Activated T-helper 2 cell treated with anti-CD3 and anti-CD28 coated beads, Interferon-gamma antibody, Interleukin-2, Interleukin-4, amounts not matched to agents 10 μg/mL and 5 μg/mL and 100 μg/mL, durations not matched to agents 14 hours and 24 hours and 36 hours (primary cell): ENCODE measurements at regions of chr12 and their contacts with region 1.

Region 1: DNA sequence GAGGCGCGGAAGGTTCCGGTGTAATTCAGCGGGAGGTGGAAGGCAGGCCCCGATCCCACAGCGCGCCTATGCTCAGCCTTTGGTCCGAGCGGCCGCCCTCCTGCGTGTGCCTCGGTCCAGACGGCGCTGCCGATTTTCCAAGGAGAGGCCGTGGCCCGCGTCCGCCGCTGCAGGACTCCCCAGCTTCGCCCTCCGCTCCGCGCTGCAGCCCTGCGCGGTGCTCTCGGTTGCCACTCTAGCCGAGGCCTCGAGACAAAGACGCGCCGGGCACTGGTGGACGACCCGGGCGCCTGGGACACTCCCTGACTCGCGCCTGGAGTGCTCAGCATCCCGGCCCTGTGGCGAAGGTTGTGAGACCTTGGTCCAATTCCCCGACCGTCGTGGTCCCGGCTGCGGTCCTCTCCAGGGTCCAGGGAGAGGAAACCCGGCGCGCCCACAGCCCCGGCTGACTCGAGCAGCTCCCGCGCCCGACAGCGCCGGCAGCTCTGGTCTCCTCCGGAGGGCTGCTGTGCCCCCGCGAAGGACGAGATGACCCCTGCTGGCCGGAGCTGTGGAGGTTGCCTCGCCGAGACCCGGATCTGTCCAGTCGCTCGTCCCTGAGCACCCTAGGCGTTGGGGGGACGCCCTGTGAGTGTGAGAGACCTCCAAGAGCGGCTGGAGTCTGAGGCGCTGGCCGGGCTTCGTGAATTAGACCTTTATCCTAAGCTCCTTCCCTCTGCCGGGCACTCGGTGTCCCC is 6.5 kb downstream of the HOXC12 start:
- DNase-seq: no peak
- H3K4me3 Mint-ChIP-seq: no peak overlapping the region
- H3K27ac Mint-ChIP-seq: no peak overlapping the region
- H3K4me1 Mint-ChIP-seq: peaks cover 4% of the 10 kb centered on the region
- H3K27me3 Mint-ChIP-seq: peaks cover 84% of the 10 kb centered on the region

Region 2: DNA sequence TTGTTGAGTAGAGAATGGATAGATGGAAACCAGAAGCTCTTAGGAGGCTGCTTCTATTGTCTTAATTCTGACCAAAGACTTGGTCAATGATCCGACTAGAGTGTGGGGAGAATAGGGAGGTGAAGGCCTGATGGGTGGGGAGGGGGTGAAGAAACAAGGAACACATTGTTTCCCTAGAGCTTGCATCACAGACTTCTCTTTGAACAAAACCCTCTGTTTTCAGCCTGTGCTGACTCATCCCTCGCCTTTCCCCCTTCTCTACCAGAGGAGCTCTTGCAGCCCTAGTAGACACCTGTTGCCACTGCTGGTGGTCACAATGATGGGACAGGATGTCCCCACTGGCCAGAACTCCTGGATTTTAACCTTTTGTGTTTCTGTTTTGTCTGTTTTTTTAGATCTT is 162.6 kb before region 1 on chr12:
- intact Hi-C with region 1: no loop called
- DNase-seq: no peak
- H3K4me3 Mint-ChIP-seq: no peak overlapping the region
- H3K27ac Mint-ChIP-seq: no peak overlapping the region
- H3K4me1 Mint-ChIP-seq: no peaks in the 10 kb centered on the region
- H3K27me3 Mint-ChIP-seq: peaks cover 31% of the 10 kb centered on the region

Region 3: DNA sequence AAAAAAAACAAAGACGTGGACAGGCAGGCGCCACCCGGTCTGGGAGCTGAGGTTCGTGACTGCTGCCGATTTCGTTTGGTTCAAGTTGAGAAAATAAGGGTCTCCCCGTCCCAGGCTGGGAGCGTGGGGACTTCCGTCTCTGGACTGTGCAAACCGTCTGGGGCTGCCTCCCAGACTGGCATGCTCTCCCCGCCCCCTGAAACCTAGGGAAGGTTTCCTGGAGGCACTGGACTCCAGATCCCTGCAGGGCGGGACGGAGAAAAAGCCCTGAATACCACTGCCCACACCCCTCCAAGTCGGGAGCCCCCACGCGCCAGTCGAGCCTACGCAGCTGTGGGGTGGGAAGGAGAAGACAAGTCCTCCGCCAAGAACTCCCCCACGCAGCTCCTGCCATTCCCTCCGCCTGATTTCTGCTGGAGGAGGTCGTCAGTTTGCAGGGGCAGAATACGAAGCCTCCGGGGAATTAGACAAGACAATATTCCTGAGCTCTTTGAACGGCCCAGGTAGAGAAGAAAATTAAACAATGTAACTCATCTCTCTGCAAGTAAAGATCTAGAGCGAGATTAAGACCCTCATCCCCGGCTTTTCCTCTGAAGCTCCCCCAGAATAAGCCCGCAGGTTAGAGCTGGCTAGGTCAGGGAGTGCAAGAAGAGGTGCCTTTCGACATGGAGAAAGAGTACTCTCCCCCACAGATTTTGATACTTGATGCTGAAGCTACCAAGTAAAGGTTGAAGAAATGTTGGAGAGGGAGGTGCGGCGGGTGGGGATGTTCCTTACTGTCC is 32.9 kb before region 1 on chr12:
- intact Hi-C with region 1: loop called (anchors 5 kb)
- DNase-seq: no peak
- H3K4me3 Mint-ChIP-seq: no peak overlapping the region
- H3K27ac Mint-ChIP-seq: no peak overlapping the region
- H3K4me1 Mint-ChIP-seq: no peaks in the 10 kb centered on the region
- H3K27me3 Mint-ChIP-seq: peaks cover 90% of the 10 kb centered on the region

Region 4: DNA sequence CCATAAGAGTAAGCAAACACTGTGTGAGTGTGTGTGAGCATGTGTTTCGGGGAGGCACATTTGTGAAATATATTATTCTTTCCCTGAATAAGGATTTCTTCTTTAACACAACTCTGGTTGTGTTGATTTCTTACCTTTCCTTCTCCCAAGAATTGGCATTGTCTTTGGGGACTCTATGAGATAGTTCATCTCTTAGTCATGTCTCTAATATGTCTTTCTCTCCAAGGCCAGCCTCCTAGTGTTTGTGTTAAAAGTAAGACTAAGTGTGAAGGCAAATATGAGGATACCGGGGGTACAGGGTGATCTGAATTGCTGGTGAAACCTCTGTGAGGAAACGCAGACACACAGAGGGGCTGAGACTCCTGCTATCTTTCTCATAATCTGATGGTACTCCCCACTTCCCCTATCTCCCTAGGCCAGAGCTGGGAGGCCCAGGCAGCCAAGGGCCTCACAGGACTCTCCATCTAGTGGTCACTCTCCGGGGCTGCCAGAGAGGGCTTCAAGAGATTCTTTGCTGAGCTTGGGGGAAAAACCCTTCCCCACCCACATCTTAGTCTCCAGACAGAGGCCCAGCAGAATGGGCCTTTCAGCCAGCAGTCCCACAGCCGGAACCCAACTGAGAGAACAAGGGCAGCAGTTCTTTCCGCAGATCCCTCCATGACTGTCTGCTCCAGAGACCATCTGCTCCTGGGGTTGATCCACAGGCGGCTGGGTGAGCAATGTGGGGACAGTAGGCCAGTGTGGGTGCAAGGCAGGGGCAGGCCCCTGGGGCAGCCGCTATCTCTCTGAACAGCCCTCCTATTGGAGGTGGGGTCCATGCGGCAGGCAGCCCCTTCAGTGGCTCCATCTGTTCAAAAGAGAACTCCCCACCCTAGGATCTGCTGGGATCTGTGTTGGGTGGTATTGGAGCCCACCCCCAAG is 12.3 kb before region 1 on chr12:
- intact Hi-C with region 1: no loop called
- DNase-seq: no peak
- H3K4me3 Mint-ChIP-seq: no peak overlapping the region
- H3K27ac Mint-ChIP-seq: no peak overlapping the region
- H3K4me1 Mint-ChIP-seq: peaks cover 3% of the 10 kb centered on the region
- H3K27me3 Mint-ChIP-seq: peaks cover 97% of the 10 kb centered on the region

Region 5: DNA sequence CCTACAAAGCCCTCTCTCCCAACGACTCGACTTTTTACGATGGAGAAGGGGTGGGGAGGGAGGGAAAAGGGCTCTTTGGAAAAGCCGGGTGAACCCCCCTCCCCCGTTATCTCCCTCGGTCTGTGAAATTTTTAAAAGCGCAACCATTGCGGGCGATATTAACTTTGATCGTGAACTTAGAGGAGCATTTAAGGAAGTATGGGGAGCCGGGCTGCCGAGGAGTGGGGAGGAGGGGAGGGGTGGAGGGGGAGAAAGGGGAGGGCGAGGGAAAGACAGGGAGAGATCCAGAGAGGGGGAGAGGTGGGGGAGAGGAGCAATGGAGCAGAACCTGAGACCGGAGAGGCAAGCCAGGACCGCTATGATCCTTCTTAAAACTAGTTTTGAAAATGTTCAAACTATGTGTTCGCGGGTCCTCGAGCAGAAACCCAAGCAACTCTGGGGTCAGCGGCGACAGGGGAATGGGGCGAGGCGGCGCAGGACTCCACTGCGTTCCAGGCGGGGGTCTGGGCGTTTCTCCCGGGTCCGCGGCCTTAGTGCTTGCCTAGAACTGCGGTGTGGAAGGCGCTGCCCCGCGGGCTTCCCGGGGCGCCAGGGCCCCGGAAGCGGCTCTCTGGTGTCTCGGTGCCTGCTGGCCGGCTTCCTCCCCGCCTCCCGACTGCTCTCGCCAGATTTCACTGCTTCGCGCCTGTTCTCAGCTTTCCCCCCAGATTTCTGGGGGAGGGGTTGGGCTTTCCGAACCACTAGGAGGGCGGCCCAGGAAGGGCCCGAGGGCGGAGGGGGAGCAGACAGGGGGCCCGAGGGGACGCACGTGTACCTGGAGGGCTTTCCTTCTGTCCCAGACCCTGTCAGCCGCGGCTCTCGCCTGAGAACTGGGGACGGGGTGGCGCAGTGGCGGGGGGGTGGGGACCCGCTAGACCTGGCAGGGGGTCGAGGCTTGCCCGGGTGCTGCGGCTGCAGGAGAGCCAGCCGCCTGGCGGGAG is 13.2 kb after region 1 on chr12 and contains the start of gene HOTAIR:
- intact Hi-C with region 1: loop called (anchors 2 kb)
- DNase-seq: no peak
- H3K4me3 Mint-ChIP-seq: no peak within 1 kb of the TSS
- H3K27ac Mint-ChIP-seq: peak within 1 kb of the TSS; percentile 50
- H3K4me1 Mint-ChIP-seq: peaks cover 6% of the 10 kb centered on the region
- H3K27me3 Mint-ChIP-seq: peaks cover 81% of the 10 kb centered on the region
- total RNA-seq, gene HOTAIR: not detected in 2 replicates

Region 6: DNA sequence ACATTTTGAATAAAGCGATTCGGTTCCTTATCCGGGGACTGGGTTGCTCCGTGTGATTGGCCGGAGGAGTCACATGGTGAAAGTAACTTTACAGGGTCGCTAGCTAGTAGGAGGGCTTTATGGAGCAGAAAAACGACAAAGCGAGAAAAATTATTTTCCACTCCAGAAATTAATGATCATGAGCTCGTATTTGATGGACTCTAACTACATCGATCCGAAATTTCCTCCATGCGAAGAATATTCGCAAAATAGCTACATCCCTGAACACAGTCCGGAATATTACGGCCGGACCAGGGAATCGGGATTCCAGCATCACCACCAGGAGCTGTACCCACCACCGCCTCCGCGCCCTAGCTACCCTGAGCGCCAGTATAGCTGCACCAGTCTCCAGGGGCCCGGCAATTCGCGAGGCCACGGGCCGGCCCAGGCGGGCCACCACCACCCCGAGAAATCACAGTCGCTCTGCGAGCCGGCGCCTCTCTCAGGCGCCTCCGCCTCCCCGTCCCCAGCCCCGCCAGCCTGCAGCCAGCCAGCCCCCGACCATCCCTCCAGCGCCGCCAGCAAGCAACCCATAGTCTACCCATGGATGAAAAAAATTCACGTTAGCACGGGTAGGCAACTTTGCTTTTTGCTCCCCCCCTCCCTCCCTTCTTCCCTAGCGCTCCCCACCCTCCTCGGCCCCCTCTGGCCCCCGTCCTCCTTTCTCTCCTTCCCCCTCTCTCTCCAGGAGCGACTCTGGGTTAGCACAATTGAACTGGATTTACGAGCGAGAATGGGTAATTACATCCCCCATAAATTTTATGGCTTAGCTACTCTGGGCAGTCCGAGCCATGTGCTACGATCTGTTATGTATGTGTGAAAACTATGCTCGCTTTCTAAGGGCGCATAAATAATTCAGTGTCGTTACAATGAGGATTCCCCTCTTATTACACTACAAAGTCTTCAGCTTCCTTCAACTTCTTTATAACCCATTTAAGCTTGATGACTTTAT is 92.9 kb after region 1 on chr12 and contains the start of gene HOXC4:
- intact Hi-C with region 1: loop called (anchors 5 kb)
- DNase-seq: no peak
- H3K4me3 Mint-ChIP-seq: peak within 1 kb of the TSS; percentile 31
- H3K27ac Mint-ChIP-seq: peak within 1 kb of the TSS; percentile 25
- H3K4me1 Mint-ChIP-seq: peaks cover 18% of the 10 kb centered on the region
- H3K27me3 Mint-ChIP-seq: peaks cover 87% of the 10 kb centered on the region
- total RNA-seq, gene HOXC4: 0.14 and 0.21 TPM in 2 replicates